WTC11 (cell line): ENCODE measurements at regions of chr10 and their contacts with region 1.

Region 1: GRCh38 chr10:63976538-63976937 is 455.3 kb downstream of the REEP3 start:
- DNase-seq: peak; percentile 75
- ATAC-seq: peak; percentile 93
- H3K4me3 Mint-ChIP-seq: no peak overlapping the region
- H3K27ac Mint-ChIP-seq: no peak overlapping the region
- H3K4me1 Mint-ChIP-seq: peaks cover 2% of the 10 kb centered on the region; the same call in 1 of the 2 replicates
- H3K27me3 Mint-ChIP-seq: no peaks in the 10 kb centered on the region; the same call in none of the 2 replicates
- CTCF ChIP-seq: peak; percentile 73

Region 2: GRCh38 chr10:63866075-63866746 is 110.3 kb before region 1 on chr10:
- CTCF ChIA-PET with region 1: interaction called, 188 read pairs
- POLR2A ChIA-PET with region 1: interaction called, 5 read pairs
- DNase-seq: peak; percentile 87
- ATAC-seq: peak; percentile 96
- H3K4me3 Mint-ChIP-seq: peak overlapping the region; percentile 73
- H3K27ac Mint-ChIP-seq: no peak overlapping the region
- H3K4me1 Mint-ChIP-seq: peaks cover 16% of the 10 kb centered on the region
- H3K27me3 Mint-ChIP-seq: no peaks in the 10 kb centered on the region; the same call in 1 of the 2 replicates
- CTCF ChIP-seq: peak; percentile 67

Region 3: GRCh38 chr10:63901228-63901627 is 75.3 kb before region 1 on chr10:
- CTCF ChIA-PET with region 1: interaction called, 38 read pairs
- POLR2A ChIA-PET with region 1: no interaction called
- DNase-seq: peak; percentile 55
- ATAC-seq: peak; percentile 99
- H3K4me3 Mint-ChIP-seq: no peak overlapping the region
- H3K27ac Mint-ChIP-seq: no peak overlapping the region
- H3K4me1 Mint-ChIP-seq: peaks cover 3% of the 10 kb centered on the region; the same call in 1 of the 2 replicates
- H3K27me3 Mint-ChIP-seq: no peaks in the 10 kb centered on the region
- CTCF ChIP-seq: peak; percentile 79

Region 4: DNA sequence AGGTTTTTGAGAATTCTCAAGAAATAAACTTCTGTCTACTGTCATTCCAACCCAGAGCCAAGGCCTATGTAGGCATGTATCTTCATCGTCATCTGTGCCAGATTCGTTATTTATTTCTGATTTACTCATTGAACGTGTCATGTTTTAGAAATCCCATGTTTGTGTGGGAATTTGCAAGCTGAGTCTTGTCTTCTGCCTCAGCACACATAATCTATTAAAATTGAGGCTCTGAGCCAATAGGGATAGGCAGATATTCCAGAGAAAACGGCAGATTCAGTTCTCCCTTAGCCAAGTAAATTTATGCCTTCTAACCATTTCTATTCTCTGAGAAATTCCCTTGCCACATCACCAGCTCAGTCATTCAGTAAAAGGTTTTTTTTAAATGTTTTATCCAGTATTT is 10.7 kb before region 1 on chr10:
- CTCF ChIA-PET with region 1: interaction called, 11 read pairs
- POLR2A ChIA-PET with region 1: no interaction called
- DNase-seq: no peak
- ATAC-seq: no peak
- H3K4me3 Mint-ChIP-seq: no peak overlapping the region
- H3K27ac Mint-ChIP-seq: no peak overlapping the region
- H3K4me1 Mint-ChIP-seq: no peaks in the 10 kb centered on the region
- H3K27me3 Mint-ChIP-seq: no peaks in the 10 kb centered on the region
- CTCF ChIP-seq: no peak

Region 5: GRCh38 chr10:64033711-64034110 is 57.2 kb after region 1 on chr10:
- CTCF ChIA-PET with region 1: interaction called, 18 read pairs
- POLR2A ChIA-PET with region 1: interaction called, 6 read pairs
- DNase-seq: no peak
- ATAC-seq: no peak
- H3K4me3 Mint-ChIP-seq: no peak overlapping the region
- H3K27ac Mint-ChIP-seq: no peak overlapping the region
- H3K4me1 Mint-ChIP-seq: peaks cover 7% of the 10 kb centered on the region
- H3K27me3 Mint-ChIP-seq: no peaks in the 10 kb centered on the region
- CTCF ChIP-seq: no peak

Region 6: GRCh38 chr10:64086083-64086767 is 109.7 kb after region 1 on chr10:
- CTCF ChIA-PET with region 1: interaction called, 10 read pairs
- POLR2A ChIA-PET with region 1: no interaction called
- DNase-seq: peak; percentile 29
- ATAC-seq: peak; percentile 91
- H3K4me3 Mint-ChIP-seq: peak overlapping the region; percentile 32
- H3K27ac Mint-ChIP-seq: no peak overlapping the region
- H3K4me1 Mint-ChIP-seq: peaks cover 48% of the 10 kb centered on the region
- H3K27me3 Mint-ChIP-seq: peaks cover 63% of the 10 kb centered on the region
- CTCF ChIP-seq: no peak